Breast epithelium (tissue), 4 donors: ENCODE measurements at regions of chr2 and their contacts with region 1.

Region 1: DNA sequence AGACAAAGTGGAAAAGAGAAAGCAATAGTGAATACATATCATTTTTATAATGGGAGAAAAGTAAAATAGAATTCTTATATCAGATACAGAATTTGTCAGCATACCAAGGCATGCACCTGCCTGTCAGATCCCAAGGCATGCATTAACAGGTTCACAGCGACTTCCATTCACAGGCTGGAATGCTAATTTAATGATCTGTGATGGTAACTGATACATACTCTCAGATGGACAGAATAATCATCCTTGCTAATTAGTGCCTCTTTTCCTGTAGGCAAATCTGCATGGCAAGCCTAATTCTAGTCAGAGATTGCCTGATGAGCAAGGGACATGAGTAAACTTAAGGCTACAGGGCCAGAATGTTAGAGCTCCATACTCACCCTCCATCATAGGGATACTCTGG is 76.1 kb downstream of the PRKRA start:
- DNase-seq: no peak
- H3K4me3 ChIP-seq: no peak overlapping the region
- H3K27ac ChIP-seq: no peak overlapping the region
- H3K4me1 ChIP-seq: no peaks in the 10 kb centered on the region
- H3K27me3 ChIP-seq: no peaks in the 10 kb centered on the region
- CTCF ChIP-seq: no peak
- POLR2A ChIP-seq: no peak

Region 2: GRCh38 chr2:178306352-178307073 is 68.4 kb before region 1 on chr2:
- intact Hi-C with region 1: no loop called
- DNase-seq: no peak
- H3K4me3 ChIP-seq: no peak overlapping the region
- H3K27ac ChIP-seq: no peak overlapping the region
- H3K4me1 ChIP-seq: no peaks in the 10 kb centered on the region
- H3K27me3 ChIP-seq: no peaks in the 10 kb centered on the region
- CTCF ChIP-seq: peak in 2 of 3 donors; percentile 13 to 40
- POLR2A ChIP-seq: no peak

Region 3: DNA sequence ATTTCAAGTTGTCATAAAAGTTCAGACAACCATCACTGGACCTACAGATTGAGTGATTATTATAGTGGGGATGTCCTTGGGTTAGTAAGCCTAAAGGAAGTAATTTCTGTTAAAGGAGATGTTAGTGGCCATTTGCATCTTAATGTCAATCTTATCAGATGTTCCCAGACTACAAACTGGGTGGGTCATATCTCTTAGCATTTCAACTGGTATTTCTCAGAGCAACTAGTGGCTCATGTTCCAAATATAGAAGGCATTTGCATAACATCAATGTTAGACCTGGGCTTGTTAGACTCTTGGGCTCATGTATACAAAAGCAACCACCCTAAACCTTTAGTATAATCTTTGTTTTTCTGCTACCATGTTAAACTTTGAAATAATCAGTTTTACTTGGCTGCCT is 123.3 kb after region 1 on chr2:
- intact Hi-C with region 1: loop called (anchors 5 kb)
- DNase-seq: no peak
- H3K4me3 ChIP-seq: no peak overlapping the region
- H3K27ac ChIP-seq: no peak overlapping the region
- H3K4me1 ChIP-seq: no peaks in the 10 kb centered on the region
- H3K27me3 ChIP-seq: no peaks in the 10 kb centered on the region
- CTCF ChIP-seq: no peak
- POLR2A ChIP-seq: no peak